Activated CD4-positive, alpha-beta T cell treated with anti-CD3 and anti-CD28 coated beads, Interleukin-2, amount 10 ng/mL, durations not matched to agents 24 days and 14 days (primary cell): ENCODE measurements at regions of chr1 and their contacts with region 1.

Region 1: GRCh38 chr1:39183503-39184353 is 20.8 kb upstream of the MACF1 start:
- DNase-seq: peak; percentile 94
- H3K4me3 Mint-ChIP-seq: peak overlapping the region; percentile 74
- H3K27ac Mint-ChIP-seq: peak overlapping the region; percentile 97
- H3K4me1 Mint-ChIP-seq: peaks cover 45% of the 10 kb centered on the region
- H3K27me3 Mint-ChIP-seq: no peaks in the 10 kb centered on the region

Region 2: DNA sequence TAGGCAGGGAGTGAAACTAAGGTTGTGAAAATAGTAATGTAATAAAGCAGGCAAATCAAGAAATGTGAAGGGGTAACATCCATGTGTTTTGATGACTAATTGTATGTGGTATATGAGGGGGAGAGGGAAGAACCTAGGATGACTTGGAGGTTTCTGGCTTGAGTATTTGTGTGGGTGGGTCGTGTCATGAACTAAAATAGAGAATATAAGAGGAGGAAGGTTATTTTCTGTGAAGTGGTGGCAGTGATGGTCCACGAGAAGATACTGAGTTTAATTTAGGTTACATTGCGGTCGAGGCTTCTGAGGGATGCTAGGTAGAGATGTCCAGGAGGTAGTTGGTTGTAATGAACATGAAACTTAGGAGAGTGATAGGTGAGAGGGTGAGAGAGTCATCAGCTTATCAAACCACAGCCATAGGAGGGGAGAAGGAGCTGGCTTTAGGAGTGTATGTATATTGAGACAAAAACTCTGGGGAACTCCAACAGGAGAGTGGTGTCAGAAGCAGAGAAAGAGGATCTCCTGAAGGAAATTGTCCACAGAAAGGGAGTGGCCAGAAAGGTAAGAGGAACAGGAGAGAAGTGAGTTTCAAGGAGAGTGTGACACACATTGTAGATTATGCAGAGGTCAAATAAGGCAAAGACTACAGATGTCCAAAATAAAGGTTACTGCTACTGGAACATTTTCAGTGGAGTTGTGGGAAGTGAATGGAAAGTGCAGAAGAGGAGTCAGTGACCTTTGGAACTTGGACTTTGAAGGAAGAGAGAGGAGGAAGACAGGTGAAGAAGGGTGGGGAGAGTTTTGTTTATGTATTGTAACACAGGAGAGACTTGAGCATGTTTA is 68.2 kb before region 1 on chr1:
- intact Hi-C with region 1: loop called (anchors 2 kb)
- DNase-seq: no peak
- H3K4me3 Mint-ChIP-seq: no peak overlapping the region
- H3K27ac Mint-ChIP-seq: no peak overlapping the region
- H3K4me1 Mint-ChIP-seq: peaks cover 6% of the 10 kb centered on the region
- H3K27me3 Mint-ChIP-seq: peaks cover 6% of the 10 kb centered on the region

Region 3: GRCh38 chr1:39258146-39258924 is 74.6 kb after region 1 on chr1:
- intact Hi-C with region 1: loop called (anchors 1 kb)
- DNase-seq: peak; percentile 88
- H3K4me3 Mint-ChIP-seq: no peak overlapping the region
- H3K27ac Mint-ChIP-seq: peak overlapping the region; percentile 57
- H3K4me1 Mint-ChIP-seq: peaks cover 21% of the 10 kb centered on the region
- H3K27me3 Mint-ChIP-seq: no peaks in the 10 kb centered on the region